ENCODE measurements at regions of chr17 and their contacts with region 1.

Region 1: DNA sequence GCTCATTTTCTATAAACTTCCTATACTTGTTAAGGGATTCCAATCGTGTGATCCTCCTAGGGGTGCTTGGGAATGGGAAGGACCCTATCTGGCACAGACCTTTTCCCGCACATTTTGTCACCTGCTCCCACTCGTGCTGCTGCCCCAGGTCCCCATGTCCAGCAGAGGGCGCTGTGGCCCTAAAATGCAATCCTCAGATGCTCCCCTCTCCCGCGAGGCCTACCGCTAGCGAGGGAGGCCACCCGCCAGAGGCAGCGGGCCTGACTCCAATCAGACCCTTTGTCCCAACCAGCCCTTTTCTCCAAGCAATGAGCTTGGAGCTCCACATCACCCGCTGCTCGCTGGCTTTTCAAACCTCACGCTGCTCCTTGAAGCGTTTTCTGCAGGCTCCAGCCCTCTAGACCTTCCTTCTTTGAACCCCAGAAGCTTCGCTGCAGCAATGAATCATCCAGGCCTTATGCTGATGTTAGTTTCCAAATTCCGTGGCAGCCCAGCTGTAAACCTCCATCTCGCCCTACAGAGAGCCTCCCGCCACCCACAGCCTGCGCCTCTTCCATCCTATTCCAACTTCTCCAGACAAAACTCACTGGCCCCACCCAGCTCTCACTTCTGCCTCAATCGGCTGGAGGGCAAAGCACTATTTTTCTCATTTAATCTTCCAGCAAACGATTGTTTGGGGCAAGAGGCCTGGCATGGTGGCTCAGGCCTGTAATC is 23.6 kb upstream of the FZD2 start:
- DNase-seq: peak; percentile 95
- H3K4me3 ChIP-seq: no peak overlapping the region
- H3K27ac ChIP-seq: no peak overlapping the region
- H3K4me1 ChIP-seq: peaks cover 9 to 33% (median 22%) of the 10 kb centered on the region in 6 donors
- H3K27me3 ChIP-seq: peaks cover 0 to 65% (median 6%) of the 10 kb centered on the region in 7 donors
- CTCF ChIP-seq: peak; percentile 70 to 94 (median 92)
- POLR2A ChIP-seq: no peak

Region 2: GRCh38 chr17:44115585-44116415 is 417.9 kb before region 1 on chr17:
- intact Hi-C with region 1: no loop called
- DNase-seq: no peak
- H3K4me3 ChIP-seq: no peak overlapping the region
- H3K27ac ChIP-seq: peak overlapping the region in 3 of 8 donors; percentile 23 to 81 (median 78)
- H3K4me1 ChIP-seq: peaks cover 33 to 100% (median 69%) of the 10 kb centered on the region in 6 donors
- H3K27me3 ChIP-seq: no peaks in the 10 kb centered on the region
- CTCF ChIP-seq: peak in 10 of 11 experiments; percentile 37 to 78 (median 68)
- POLR2A ChIP-seq: no peak

Region 3: DNA sequence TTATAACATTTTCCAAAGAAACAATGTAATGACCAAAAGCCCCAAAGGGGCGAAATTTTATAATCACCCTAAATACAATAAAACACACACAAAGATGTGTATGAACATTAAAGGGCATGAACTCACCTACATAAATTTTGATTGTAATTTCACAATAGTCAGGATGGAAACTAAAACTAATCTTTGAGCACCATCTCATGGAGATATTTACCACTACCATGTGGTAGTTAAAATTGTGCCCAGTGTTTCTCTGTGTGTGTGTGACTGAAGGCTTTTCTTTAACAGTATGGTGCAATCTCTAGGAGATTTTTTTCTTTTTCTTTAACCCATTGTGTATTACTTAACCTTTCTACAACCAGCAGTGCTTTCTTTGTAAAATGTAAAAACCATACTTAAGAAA is 102.9 kb after region 1 on chr17:
- intact Hi-C with region 1: loop called (anchors 5 kb)
- DNase-seq: no peak
- H3K4me3 ChIP-seq: no peak overlapping the region
- H3K27ac ChIP-seq: no peak overlapping the region
- H3K4me1 ChIP-seq: no peaks in the 10 kb centered on the region
- H3K27me3 ChIP-seq: peaks cover 0 to 9% (median 0%) of the 10 kb centered on the region in 7 donors
- CTCF ChIP-seq: peak in 9 of 11 experiments; percentile 18 to 49 (median 33)
- POLR2A ChIP-seq: no peak